ENCODE measurements at regions of chr3 and their contacts with region 1.

Region 1: DNA sequence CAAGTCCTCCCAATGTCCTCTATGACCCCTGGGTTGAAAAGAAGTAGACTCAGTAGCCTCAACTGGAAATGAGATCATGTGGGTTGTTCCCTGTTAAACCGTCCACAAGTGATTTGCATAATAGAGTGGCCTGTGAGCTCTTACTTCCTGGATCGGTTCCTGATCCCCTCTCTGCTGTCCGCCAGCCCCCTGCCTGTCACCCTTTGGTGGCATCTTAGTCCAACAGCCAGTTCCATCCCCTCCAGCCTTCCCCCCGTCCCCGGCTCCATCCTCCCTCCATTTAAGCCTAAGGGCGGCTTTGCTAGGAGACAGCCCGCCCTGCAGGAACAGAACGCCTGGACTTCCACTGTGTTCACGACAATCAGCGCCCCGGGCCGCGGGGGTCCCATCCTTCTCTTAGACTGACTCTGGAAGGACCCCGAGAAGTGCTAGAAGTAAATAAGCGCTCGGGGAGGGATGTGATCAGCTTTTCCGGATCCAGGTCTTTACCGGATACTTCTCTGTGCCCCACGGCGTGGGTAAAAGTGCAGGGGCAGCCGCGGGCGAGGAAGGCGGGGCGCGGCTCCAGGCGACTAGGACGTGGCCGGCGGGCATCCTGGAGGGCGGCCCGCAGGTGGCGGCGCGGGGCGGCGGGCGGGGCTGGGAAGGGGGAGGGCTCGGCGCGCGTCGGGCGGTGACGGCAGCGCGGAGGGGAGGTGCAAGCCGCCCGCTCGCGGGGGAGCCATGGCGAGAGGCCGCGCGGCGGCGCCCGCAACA is 51.2 kb upstream of the ULK4 start:
- DNase-seq: peak; percentile 77
- H3K4me3 Mint-ChIP-seq: peak overlapping the region; percentile 86
- H3K27ac Mint-ChIP-seq: peak overlapping the region; percentile 87
- H3K4me1 Mint-ChIP-seq: peaks cover 47% of the 10 kb centered on the region
- H3K27me3 Mint-ChIP-seq: no peaks in the 10 kb centered on the region

Region 2: DNA sequence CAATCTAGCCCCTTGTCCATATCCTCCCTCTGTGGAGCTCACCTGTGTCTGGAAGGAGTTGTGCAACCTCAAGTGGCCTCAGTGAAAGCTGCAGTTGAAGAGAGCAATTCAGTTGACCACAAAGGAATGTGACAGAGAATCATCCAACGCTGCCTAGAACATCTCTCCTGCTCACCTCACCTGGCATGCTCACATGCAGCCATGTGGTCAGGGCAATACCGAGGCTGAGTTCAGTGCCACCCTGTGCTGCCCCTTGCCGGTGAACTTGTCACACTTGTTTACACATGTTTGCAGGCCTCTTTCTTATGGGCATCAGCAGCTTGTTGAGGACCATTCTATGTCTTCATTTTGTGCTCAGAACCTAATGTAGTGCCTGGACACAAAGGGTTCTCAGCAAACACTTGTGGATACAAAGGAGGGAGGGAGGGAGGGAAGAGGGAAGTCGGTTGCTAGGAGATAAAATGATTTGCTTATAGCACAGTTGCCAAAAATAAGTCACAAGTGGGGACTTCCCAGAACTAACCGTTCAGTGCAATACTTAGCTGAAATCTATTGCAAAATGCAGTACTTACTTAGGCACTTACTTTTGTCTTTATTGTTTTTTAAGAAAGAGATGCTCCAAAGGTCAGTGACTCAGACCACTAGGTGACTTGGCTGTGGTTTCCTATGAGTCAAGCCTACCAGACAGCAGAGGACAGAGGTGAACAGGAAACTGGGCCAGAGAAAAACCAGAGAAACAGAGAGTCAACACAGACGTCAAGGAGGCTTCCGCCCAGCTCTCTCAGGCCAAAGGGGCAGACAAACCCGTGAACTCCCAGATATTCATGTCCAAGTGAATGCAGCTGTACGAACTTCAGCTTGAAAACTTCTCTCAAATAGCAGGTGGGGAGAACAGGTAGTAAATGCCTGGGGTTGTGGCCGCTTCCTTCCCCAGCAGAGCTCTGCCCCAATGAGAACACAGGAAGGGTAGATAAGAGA is 1041.6 kb before region 1 on chr3:
- CTCF ChIA-PET with region 1: no interaction called
- intact Hi-C with region 1: loop called (anchors 10 kb)
- DNase-seq: peak; percentile 48
- H3K4me3 Mint-ChIP-seq: no peak overlapping the region
- H3K27ac Mint-ChIP-seq: peak overlapping the region; percentile 10
- H3K4me1 Mint-ChIP-seq: peaks cover 13% of the 10 kb centered on the region
- H3K27me3 Mint-ChIP-seq: peaks cover 26% of the 10 kb centered on the region

Region 3: DNA sequence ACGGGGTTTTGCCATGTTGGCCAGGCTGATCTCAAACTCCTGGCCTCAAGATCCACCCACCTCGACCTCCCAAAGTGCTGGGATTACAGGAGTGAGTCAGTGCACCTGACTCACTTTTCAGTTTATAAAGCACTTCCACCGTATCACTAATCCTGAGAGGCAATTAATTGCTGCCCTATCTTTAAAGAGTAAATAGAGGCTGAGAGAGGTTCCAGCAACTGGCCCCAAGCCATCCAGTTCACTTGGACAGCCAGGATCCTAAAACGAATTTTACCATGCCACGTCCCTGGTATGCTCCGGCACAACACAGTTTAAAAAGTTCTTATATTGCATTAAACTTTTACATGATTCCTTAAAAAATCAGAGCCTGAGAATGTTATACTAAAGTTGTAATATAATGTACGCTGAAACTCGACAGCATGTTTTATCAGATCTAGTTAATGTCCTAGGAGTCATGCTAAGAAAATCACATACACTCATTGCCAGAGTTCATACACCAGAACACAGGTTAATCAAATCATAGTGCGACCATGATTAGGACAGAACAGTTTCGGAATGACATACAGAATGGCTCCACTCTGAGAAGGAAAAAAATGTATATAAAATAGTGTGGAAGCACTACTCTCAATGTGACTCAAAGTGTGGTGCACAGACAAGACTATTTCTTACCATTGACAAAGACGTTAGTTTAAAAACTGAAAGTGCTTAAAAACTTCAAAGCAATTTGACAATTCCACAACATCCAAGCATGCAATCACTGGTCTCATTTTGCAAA is 176.6 kb before region 1 on chr3:
- CTCF ChIA-PET with region 1: no interaction called
- intact Hi-C with region 1: loop called (anchors 1 kb)
- DNase-seq: peak; percentile 9
- H3K4me3 Mint-ChIP-seq: no peak overlapping the region
- H3K27ac Mint-ChIP-seq: no peak overlapping the region
- H3K4me1 Mint-ChIP-seq: peaks cover 16% of the 10 kb centered on the region
- H3K27me3 Mint-ChIP-seq: no peaks in the 10 kb centered on the region

Region 4: GRCh38 chr3:42061713-42062408 is 48.7 kb after region 1 on chr3:
- CTCF ChIA-PET with region 1: no interaction called
- intact Hi-C with region 1: loop called (anchors 5 kb)
- DNase-seq: no peak
- H3K4me3 Mint-ChIP-seq: no peak overlapping the region
- H3K27ac Mint-ChIP-seq: no peak overlapping the region
- H3K4me1 Mint-ChIP-seq: peaks cover 8% of the 10 kb centered on the region
- H3K27me3 Mint-ChIP-seq: no peaks in the 10 kb centered on the region

Region 5: GRCh38 chr3:42101048-42101447 is 87.9 kb after region 1 on chr3:
- CTCF ChIA-PET with region 1: interaction called, 25 read pairs
- intact Hi-C with region 1: loop called (anchors 1 kb)
- DNase-seq: no peak
- H3K4me3 Mint-ChIP-seq: no peak overlapping the region
- H3K27ac Mint-ChIP-seq: no peak overlapping the region
- H3K4me1 Mint-ChIP-seq: peaks cover 10% of the 10 kb centered on the region
- H3K27me3 Mint-ChIP-seq: no peaks in the 10 kb centered on the region

Region 6: DNA sequence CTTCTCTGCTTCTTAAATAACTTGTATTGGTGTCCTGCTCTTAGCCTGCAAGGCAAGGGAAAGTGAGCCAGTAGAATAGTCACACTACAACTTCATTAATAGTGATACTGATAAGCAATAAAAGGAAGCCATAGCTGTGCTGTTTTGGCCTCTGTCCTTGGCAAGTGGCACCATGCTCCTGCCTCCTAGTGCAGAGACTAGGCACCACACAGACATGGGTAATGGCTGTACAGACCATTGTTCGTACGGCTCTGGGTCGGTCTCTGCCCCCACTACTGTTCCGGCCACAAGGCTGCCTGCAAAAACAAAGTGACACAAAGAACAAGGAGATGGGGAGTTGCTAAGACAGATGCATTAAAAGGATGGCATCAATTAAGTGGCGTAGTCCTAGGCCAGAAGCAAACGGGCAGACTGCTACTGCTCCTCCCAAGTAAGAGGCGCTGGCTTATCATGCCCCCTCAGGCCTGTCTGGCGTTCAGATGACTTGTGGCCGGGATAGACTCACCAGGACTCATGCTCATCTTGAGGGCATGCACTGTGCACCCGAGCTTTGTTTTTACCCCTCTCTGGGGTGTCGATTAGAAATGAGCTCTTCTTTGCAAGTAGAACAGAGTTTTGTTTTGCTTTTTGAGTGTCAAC is 153.7 kb after region 1 on chr3:
- CTCF ChIA-PET with region 1: no interaction called
- intact Hi-C with region 1: no loop called
- DNase-seq: no peak
- H3K4me3 Mint-ChIP-seq: no peak overlapping the region
- H3K27ac Mint-ChIP-seq: no peak overlapping the region
- H3K4me1 Mint-ChIP-seq: peaks cover 14% of the 10 kb centered on the region
- H3K27me3 Mint-ChIP-seq: no peaks in the 10 kb centered on the region

Region 7: GRCh38 chr3:42387802-42388651 is 374.9 kb after region 1 on chr3:
- CTCF ChIA-PET with region 1: no interaction called
- intact Hi-C with region 1: loop called (anchors 10 kb)
- DNase-seq: peak; percentile 75
- H3K4me3 Mint-ChIP-seq: peak overlapping the region; percentile 44
- H3K27ac Mint-ChIP-seq: peak overlapping the region; percentile 96
- H3K4me1 Mint-ChIP-seq: peaks cover 25% of the 10 kb centered on the region
- H3K27me3 Mint-ChIP-seq: no peaks in the 10 kb centered on the region